Activated CD4-positive, alpha-beta memory T cell treated with anti-CD3 and anti-CD28 coated beads for 36 hours (primary cell): ENCODE measurements at regions of chr6 and their contacts with region 1.

Region 1: DNA sequence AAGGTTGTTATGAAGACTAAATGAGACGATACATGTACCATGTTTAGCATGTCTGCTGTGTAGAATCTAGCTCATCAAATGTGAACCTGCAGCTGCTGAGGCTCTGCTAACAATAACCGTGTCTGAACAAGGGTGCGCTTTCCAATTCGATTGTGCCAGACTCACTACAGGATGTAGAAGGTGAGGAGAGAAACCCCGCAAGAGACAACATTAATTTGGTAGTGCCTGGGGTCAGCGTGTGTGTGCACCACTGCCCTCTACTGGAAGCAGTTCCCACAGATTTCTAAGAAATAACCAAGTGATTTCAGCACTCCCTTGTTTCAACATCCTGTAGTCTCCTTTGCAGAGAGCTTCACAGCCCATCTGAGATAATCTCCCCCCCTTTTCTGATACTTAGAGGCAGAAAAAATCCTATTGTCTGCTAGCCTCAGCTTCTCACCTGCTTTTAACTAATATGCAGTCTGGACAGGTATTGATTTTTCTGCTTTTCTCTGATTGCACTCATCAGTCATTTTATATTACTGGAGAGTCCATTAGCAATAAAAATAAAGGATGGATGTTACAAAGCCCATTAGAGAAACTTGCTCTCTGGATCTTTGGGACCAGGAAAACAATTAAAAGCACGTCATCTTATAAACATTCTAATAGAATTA is 96.7 kb upstream of the BACH2 start:
- DNase-seq: peak; percentile 85
- H3K4me3 Mint-ChIP-seq: no peak overlapping the region
- H3K27ac Mint-ChIP-seq: peak overlapping the region; percentile 71
- H3K4me1 Mint-ChIP-seq: peaks cover 78% of the 10 kb centered on the region
- H3K27me3 Mint-ChIP-seq: no peaks in the 10 kb centered on the region

Region 2: GRCh38 chr6:89638320-89639195 is 754.8 kb before region 1 on chr6 and contains the start of gene LYRM2:
- CTCF ChIA-PET with region 1: no interaction called
- POLR2A ChIA-PET with region 1: no interaction called
- intact Hi-C with region 1: no loop called
- DNase-seq: peak; percentile 95
- H3K4me3 Mint-ChIP-seq: peak within 1 kb of the TSS; percentile 81
- H3K27ac Mint-ChIP-seq: peak within 1 kb of the TSS; percentile 96
- H3K4me1 Mint-ChIP-seq: peaks cover 32% of the 10 kb centered on the region
- H3K27me3 Mint-ChIP-seq: no peaks in the 10 kb centered on the region
- total RNA-seq, gene LYRM2: 25.5 to 26.4 TPM

Region 3: DNA sequence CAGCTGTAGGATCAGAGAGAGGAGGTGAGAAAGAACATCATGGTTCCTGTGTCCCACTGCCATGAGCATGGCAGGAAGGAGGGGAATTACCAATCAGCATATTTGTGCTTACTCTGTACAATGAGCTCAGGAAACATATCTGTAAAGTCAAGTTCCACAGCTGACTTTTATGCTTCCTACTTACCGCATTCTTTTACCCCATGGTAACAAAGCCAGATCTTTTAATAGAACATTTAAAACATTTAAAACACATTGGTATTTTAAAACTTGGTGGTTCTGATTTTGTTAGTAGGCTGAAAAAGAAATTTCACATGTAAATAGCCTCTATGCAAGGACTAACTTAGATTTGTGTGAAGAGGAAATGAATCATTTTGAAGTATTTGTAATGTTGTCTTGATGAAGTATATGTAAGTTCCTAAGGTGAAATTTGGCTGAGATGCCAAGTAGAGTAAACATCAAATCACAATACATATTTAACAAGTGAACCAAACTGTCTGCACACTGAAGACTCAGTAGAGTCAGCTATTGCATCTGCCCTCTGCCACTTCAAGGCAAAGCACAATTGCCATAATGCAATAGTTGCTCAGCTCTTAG is 384.4 kb before region 1 on chr6:
- CTCF ChIA-PET with region 1: interaction called, 3 read pairs
- POLR2A ChIA-PET with region 1: no interaction called
- intact Hi-C with region 1: loop called (anchors 2 kb)
- DNase-seq: peak; percentile 54
- H3K4me3 Mint-ChIP-seq: peak overlapping the region; percentile 12
- H3K27ac Mint-ChIP-seq: peak overlapping the region; percentile 94
- H3K4me1 Mint-ChIP-seq: peaks cover 48% of the 10 kb centered on the region
- H3K27me3 Mint-ChIP-seq: no peaks in the 10 kb centered on the region

Region 4: GRCh38 chr6:90274451-90275030 is 118.8 kb before region 1 on chr6:
- CTCF ChIA-PET with region 1: interaction called, 7 read pairs
- POLR2A ChIA-PET with region 1: interaction called, 7 read pairs
- intact Hi-C with region 1: loop called (anchors 1 kb)
- DNase-seq: peak; percentile 96
- H3K4me3 Mint-ChIP-seq: peak overlapping the region; percentile 27
- H3K27ac Mint-ChIP-seq: peak overlapping the region; percentile 87
- H3K4me1 Mint-ChIP-seq: peaks cover 86% of the 10 kb centered on the region
- H3K27me3 Mint-ChIP-seq: no peaks in the 10 kb centered on the region

Region 5: GRCh38 chr6:90326404-90327057 is 66.8 kb before region 1 on chr6:
- CTCF ChIA-PET with region 1: interaction called, 5 read pairs
- POLR2A ChIA-PET with region 1: interaction called, 5 read pairs
- intact Hi-C with region 1: loop called (anchors 1 kb)
- DNase-seq: peak; percentile 19
- H3K4me3 Mint-ChIP-seq: no peak overlapping the region
- H3K27ac Mint-ChIP-seq: peak overlapping the region; percentile 59
- H3K4me1 Mint-ChIP-seq: peaks cover 27% of the 10 kb centered on the region
- H3K27me3 Mint-ChIP-seq: no peaks in the 10 kb centered on the region

Region 6: GRCh38 chr6:90383196-90383822 is 10.0 kb before region 1 on chr6:
- CTCF ChIA-PET with region 1: interaction called, 15 read pairs
- POLR2A ChIA-PET with region 1: interaction called, 17 read pairs
- intact Hi-C with region 1: no loop called
- DNase-seq: peak; percentile 47
- H3K4me3 Mint-ChIP-seq: no peak overlapping the region
- H3K27ac Mint-ChIP-seq: peak overlapping the region; percentile 35
- H3K4me1 Mint-ChIP-seq: peaks cover 28% of the 10 kb centered on the region
- H3K27me3 Mint-ChIP-seq: no peaks in the 10 kb centered on the region

Region 7: DNA sequence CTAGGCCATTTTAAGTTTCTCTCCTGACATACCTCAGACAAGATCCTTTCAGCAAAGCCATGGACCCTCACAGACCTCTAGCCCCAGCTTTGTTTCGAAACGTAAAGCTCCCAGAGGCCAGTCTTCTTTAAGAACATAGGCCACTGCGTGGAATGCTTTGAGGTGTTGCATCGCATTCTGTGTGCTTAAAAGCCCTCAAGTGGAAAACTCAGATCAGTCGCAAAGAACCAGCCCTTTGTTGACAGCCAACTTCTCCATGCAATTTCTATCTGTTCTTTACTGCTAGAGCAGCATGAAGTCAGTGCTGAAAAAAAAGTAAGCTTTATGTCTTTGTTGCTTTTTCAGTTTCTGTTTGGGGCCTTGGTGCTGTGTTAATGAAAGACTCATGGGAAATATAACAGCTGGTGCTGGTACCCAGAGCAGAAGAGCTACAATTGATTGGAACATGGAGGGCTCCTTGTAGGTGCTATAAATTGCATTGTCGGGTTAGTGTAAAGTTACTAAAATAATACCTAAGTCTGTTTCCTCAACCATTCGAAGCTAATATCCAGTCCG is 50.9 kb after region 1 on chr6:
- CTCF ChIA-PET with region 1: interaction called, 13 read pairs
- POLR2A ChIA-PET with region 1: interaction called, 3 read pairs
- intact Hi-C with region 1: loop called (anchors 1 kb)
- DNase-seq: no peak
- H3K4me3 Mint-ChIP-seq: peak overlapping the region; percentile 48
- H3K27ac Mint-ChIP-seq: peak overlapping the region; percentile 92
- H3K4me1 Mint-ChIP-seq: peaks cover 47% of the 10 kb centered on the region
- H3K27me3 Mint-ChIP-seq: no peaks in the 10 kb centered on the region

Region 8: DNA sequence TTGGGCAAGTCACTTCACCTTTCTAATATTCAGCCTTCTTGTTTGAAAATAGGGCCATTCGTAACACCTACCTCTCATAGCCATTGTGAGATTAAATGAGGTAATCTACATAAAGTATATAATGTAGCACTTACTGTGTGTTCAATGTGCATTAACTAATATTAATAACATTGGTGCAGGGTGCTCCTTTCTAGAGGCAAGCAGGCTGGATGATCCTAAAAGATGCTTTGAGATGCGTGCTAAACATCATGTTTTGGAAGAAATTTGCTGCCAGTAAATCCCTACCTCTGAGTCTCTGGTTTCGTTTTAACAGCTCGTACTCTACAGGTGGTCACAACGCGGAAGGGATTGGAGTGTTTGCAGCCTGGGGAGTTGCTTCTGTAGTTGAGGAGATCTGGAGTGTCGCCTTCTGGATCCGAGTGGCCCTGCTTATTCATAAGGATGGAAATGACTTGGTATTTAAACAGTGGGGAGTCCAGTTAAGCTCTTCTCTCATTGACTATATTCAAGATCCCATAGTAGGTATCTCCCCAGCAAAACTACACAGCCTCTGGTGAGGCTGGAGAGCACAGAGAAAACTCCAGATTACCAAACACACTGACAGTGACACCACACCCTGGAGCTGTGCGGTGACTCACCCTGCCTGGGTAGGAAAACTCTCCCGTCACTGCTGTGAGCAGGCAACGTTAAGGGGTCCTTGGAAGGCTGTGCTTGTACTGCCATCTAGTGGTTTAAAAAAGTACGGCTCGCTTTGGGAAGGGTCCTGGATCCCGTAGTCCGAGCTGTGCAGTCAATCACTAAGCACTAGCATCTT is 85.6 kb after region 1 on chr6:
- CTCF ChIA-PET with region 1: interaction called, 50 read pairs
- POLR2A ChIA-PET with region 1: interaction called, 63 read pairs
- intact Hi-C with region 1: no loop called
- DNase-seq: peak; percentile 91
- H3K4me3 Mint-ChIP-seq: peak overlapping the region; percentile 3
- H3K27ac Mint-ChIP-seq: peak overlapping the region; percentile 66
- H3K4me1 Mint-ChIP-seq: peaks cover 58% of the 10 kb centered on the region
- H3K27me3 Mint-ChIP-seq: no peaks in the 10 kb centered on the region